Right ventricle myocardium inferior (tissue), 1 donor: ENCODE measurements at regions of chr10 and their contacts with region 1.

Region 1: DNA sequence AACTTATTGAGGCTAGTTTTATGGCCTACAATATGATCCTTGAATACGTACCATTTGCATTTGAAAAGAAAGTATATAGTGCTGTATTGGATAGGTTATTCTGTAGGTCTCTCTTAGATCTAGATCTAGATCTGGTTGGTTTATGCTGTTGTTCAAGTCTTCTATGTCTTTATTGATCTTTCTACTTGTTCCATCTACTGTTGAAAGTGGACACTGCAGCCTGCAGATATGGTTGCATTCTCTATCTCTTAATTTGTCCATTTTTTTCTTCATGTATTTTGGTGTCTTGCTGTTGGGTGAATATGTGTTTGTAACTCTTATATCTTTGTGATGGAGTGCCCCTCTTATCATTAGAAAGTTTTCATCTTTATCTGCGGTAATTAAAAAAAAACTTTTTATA is 139.4 kb upstream of the PCDH15 start:
- DNase-seq: no peak
- ATAC-seq: no peak

Region 2: DNA sequence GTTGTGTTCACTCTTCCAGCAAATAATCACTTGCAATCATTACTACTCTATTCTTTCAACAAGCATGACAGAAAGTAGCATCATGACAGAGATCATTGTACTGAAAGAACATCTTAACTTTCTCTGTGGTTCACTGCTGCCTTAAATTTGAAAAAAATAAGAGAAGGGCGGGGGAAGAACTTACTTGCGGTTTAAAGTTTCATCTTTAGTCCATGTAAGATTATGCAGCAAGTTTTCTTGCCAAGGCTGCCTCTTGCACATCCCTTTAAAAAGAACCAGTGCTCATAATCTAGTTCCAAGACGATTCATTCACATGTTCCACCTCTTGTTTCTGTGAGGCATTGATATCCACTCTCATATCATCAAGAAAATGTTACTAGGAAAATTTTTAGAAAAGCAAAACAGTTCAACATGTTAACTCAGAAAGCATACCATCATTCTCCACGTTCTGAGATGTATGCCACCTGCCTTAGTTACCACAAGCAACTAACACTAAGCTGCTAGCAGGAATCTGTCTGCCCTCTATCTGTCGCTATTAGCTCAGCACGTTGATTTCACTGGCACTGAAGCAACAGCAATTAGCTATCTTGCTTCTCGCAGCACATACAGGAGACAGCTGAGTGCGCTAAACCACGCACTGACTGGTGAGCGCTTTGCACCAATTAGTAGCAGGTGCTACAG is 139.5 kb before region 1 on chr10 and contains the start of gene PCDH15:
- intact Hi-C with region 1: loop called (anchors 5 kb)
- DNase-seq: no peak
- ATAC-seq: peak; percentile 89
- total RNA-seq, gene PCDH15: 0.41 TPM

Region 3: GRCh38 chr10:55063811-55064210 is 123.4 kb after region 1 on chr10:
- intact Hi-C with region 1: no loop called
- DNase-seq: no peak
- ATAC-seq: no peak